Activated CD4-positive, alpha-beta memory T cell treated with anti-CD3 and anti-CD28 coated beads, Interleukin-2, amount 10 ng/mL, durations not matched to agents 7 days and 5 days (primary cell): ENCODE measurements at regions of chr2 and their contacts with region 1.

Region 1: DNA sequence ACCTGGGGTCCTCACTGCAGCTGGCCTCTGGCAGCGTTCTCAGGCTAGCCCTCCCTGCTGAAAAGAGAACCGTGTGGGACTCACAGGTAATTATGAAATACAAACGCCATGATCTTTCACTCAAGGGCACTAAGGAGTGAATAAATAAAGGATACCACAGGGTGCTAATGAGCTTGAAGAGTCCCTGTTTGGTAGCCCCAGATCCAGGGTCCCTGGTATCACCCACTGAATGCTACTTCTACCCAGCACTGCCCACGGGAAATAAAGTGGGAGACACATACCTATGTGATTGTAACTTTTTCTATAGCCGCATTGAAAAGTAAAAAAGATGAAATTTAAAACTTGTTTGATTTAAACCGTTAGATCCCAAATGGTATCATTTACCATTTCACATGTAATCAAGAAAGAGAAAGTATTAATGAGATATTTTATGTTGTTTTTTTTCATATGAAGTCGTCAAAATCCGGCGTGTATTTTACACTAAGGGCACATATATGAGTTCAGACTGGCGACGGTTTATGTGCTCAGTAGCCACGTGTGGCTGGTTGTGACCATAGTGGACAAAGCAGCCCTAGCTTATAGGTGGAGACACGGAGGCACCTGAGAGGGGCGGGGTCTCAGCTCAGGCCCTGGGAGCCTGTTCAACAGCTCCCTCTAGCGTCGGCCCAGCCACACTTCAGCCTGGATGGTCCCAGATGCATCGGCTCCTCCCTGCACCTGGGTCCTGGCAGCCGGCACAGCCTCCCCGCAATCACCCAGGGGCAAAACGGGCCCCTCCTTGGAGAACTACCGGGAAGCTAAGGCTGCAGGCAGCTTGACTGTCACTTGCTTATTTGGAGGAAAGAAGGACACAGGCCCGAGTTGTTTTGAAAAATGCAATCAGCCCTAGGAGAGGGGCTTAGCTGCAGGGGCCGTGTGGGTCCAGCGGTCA is 39.2 kb downstream of the ODC1 start:
- DNase-seq: peak; percentile 85
- H3K4me3 Mint-ChIP-seq: peak overlapping the region; percentile 74
- H3K27ac Mint-ChIP-seq: peak overlapping the region; percentile 93
- H3K4me1 Mint-ChIP-seq: peaks cover 36% of the 10 kb centered on the region
- H3K27me3 Mint-ChIP-seq: no peaks in the 10 kb centered on the region

Region 2: GRCh38 chr2:10129490-10129889 is 279.4 kb before region 1 on chr2:
- CTCF ChIA-PET with region 1: interaction called, 127 read pairs
- POLR2A ChIA-PET with region 1: interaction called, 62 read pairs
- DNase-seq: no peak
- H3K4me3 Mint-ChIP-seq: peak overlapping the region; percentile 50
- H3K27ac Mint-ChIP-seq: peak overlapping the region; percentile 77
- H3K4me1 Mint-ChIP-seq: peaks cover 76% of the 10 kb centered on the region
- H3K27me3 Mint-ChIP-seq: no peaks in the 10 kb centered on the region

Region 3: DNA sequence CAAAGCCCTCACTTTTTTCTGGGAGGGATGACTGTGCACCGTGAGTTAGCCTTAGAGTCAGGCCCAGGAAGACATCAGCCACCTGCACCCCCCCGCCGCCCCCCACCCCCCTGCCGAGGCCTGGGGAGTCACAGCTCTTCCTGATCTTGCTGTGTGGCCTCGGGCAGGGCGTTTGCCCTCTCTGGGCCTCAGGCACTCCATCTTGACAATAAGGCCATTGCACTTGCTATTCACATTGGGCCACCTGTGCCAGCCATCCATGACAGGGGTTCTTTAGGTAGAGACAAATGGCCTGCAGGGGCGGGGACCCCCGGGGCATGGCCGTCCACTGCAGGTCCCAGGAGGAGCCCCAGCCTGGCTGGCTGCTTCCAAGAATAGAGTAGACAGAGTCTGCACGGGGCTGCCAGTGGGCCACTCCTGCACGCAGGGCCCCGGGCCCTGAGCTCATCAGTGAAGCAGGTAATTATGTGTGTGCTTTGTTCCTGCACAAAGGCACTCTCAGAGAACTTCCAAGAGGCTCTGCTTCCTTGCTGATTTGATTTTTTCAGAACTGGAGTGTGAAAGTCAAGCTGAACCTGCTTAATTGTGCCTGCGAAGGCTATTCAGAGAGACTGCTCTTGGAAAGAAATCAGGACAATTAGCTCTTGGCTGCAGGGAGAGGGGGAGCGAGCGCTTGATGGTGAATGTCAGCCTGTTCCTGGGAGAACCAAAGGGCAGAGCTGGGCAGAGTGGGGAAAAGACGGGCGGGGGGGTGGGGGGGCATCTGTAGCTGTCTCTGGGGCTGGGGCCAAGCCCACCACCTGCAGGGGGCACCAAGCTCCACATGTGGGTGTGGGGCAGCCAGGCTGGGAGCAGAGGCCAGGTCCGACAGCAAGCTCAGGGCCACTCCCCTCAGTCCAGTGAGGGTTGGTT is 246.1 kb before region 1 on chr2:
- CTCF ChIA-PET with region 1: interaction called, 18 read pairs
- POLR2A ChIA-PET with region 1: interaction called, 4 read pairs
- DNase-seq: no peak
- H3K4me3 Mint-ChIP-seq: no peak overlapping the region
- H3K27ac Mint-ChIP-seq: no peak overlapping the region
- H3K4me1 Mint-ChIP-seq: peaks cover 37% of the 10 kb centered on the region
- H3K27me3 Mint-ChIP-seq: no peaks in the 10 kb centered on the region

Region 4: GRCh38 chr2:10302479-10303180 is 106.3 kb before region 1 on chr2 and contains the start of gene HPCAL1:
- CTCF ChIA-PET with region 1: interaction called, 138 read pairs
- POLR2A ChIA-PET with region 1: interaction called, 62 read pairs
- DNase-seq: peak; percentile 86
- H3K4me3 Mint-ChIP-seq: peak within 1 kb of the TSS; percentile 98
- H3K27ac Mint-ChIP-seq: peak within 1 kb of the TSS; percentile 82
- H3K4me1 Mint-ChIP-seq: peaks cover 77% of the 10 kb centered on the region
- H3K27me3 Mint-ChIP-seq: no peaks in the 10 kb centered on the region
- total RNA-seq, gene HPCAL1: 70.0 to 71.4 TPM

Region 5: DNA sequence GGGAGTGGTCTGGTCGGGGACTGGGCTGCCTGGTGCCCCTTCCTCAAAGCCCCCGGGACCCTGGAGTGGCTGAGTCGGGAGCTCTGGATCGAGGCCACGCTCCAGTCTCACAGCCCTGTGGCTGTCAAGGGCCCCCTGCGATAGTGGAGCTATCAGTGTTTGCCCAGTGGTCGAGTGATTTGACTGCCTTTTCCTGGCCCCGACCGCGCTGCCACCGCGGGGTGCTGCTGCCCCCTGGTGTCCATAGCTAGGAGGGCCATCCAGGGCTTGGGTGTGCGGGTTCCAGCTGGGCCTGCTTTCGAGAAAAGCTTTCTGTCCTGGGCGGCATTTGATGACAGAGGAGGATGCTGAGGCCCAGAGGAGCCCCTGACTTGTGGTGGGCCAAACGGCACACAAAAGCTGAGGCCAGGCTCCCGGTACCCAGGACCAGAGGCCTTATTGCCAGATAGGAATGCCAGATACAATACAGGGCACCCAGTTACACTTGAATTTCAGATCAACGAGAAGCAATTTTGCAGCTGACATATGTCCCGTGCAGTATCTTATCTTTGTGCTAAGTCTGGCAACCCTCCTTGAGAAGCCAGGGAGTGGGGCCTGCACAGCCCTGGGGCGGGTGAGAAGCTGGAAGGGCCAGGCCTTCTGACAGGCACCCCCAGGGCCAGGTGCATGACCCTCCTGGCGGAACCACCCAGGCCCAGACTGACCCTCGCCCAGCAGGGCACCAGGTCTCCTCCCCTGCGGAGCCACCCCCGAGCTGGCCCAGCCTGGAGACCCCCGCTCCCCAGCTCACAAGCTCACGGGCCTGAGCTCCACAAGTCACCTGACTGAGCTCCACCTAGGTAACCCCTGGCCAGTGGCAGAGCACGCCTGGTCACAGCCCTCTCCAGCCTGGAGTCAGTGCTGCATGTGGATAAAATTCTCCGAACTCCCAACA is 26.2 kb after region 1 on chr2:
- CTCF ChIA-PET with region 1: interaction called, 45 read pairs
- POLR2A ChIA-PET with region 1: interaction called, 14 read pairs
- DNase-seq: peak; percentile 75
- H3K4me3 Mint-ChIP-seq: no peak overlapping the region
- H3K27ac Mint-ChIP-seq: no peak overlapping the region
- H3K4me1 Mint-ChIP-seq: peaks cover 15% of the 10 kb centered on the region
- H3K27me3 Mint-ChIP-seq: peaks cover 12% of the 10 kb centered on the region

Region 6: GRCh38 chr2:10700078-10700803 is 291.3 kb after region 1 on chr2:
- CTCF ChIA-PET with region 1: no interaction called
- POLR2A ChIA-PET with region 1: no interaction called
- DNase-seq: no peak
- H3K4me3 Mint-ChIP-seq: no peak overlapping the region
- H3K27ac Mint-ChIP-seq: no peak overlapping the region
- H3K4me1 Mint-ChIP-seq: peaks cover 12% of the 10 kb centered on the region
- H3K27me3 Mint-ChIP-seq: peaks cover 3% of the 10 kb centered on the region